B cell (primary cell): ENCODE measurements at regions of chr15 and their contacts with region 1.

Region 1: DNA sequence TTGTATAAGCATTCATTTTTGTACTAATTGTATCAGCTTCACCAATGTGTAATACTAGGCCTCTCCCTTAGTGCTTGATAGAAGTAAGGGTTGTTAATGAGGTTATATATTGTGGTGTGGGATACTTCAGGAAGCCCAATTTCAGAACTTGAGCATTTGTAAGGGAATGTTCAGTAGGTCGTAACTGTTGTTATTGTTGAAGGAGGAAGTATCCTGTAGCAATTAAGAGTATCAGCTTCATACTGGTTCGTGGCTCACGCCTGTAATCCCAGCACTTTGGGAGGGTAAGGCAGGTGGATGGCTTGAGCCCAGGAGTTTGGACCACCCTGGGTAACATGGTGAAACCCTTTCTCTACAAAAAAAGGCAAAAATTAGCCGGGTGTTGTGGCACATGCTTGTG is 30.6 kb downstream of the IQGAP1 start:
- DNase-seq: no peak
- ATAC-seq: no peak
- H3K4me3 ChIP-seq: no peak overlapping the region
- H3K4me3 Mint-ChIP-seq: no peak overlapping the region
- H3K27ac ChIP-seq: no peak overlapping the region
- H3K27ac Mint-ChIP-seq: peak overlapping the region; percentile 20
- H3K4me1 ChIP-seq: peaks cover 48 to 51% of the 10 kb centered on the region in 2 donors
- H3K4me1 Mint-ChIP-seq: peaks cover 61% of the 10 kb centered on the region
- H3K27me3 ChIP-seq: no peaks in the 10 kb centered on the region
- H3K27me3 Mint-ChIP-seq: no peaks in the 10 kb centered on the region
- CTCF ChIP-seq: no peak

Region 2: DNA sequence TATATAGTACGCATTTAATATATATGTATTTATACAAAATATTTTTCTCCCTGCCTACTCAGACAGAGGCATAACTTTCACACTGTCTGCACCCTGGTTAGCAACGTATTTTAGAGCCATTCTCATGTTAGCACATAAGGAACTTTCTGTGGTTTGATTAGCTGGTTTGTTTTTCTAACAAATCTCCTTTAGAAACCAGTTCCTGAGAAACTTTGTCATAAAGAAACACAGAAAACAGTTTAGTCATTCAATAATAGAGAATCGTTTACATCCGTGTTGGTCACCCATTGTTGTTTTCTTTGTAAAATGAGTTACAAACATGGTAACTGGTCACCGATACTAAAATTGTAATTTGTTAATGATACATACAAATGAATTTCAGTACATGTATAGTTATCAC is 159.1 kb before region 1 on chr15:
- CTCF ChIA-PET with region 1: no interaction called
- POLR2A ChIA-PET with region 1: interaction called, 12 read pairs
- intact Hi-C with region 1: no loop called
- DNase-seq: no peak
- ATAC-seq: no peak
- H3K4me3 ChIP-seq: no peak overlapping the region
- H3K4me3 Mint-ChIP-seq: no peak overlapping the region
- H3K27ac ChIP-seq: no peak overlapping the region
- H3K27ac Mint-ChIP-seq: no peak overlapping the region
- H3K4me1 ChIP-seq: peaks cover 9 to 10% of the 10 kb centered on the region in 2 donors
- H3K4me1 Mint-ChIP-seq: peaks cover 9% of the 10 kb centered on the region
- H3K27me3 ChIP-seq: no peaks in the 10 kb centered on the region
- H3K27me3 Mint-ChIP-seq: no peaks in the 10 kb centered on the region
- CTCF ChIP-seq: no peak

Region 3: GRCh38 chr15:90459368-90459767 is 40.7 kb after region 1 on chr15:
- CTCF ChIA-PET with region 1: no interaction called
- POLR2A ChIA-PET with region 1: no interaction called
- intact Hi-C with region 1: no loop called
- DNase-seq: no peak
- ATAC-seq: no peak
- H3K4me3 ChIP-seq: no peak overlapping the region
- H3K4me3 Mint-ChIP-seq: no peak overlapping the region
- H3K27ac ChIP-seq: no peak overlapping the region
- H3K27ac Mint-ChIP-seq: no peak overlapping the region
- H3K4me1 ChIP-seq: no peaks in the 10 kb centered on the region
- H3K4me1 Mint-ChIP-seq: no peaks in the 10 kb centered on the region
- H3K27me3 ChIP-seq: no peaks in the 10 kb centered on the region
- H3K27me3 Mint-ChIP-seq: no peaks in the 10 kb centered on the region
- CTCF ChIP-seq: no peak